ENCODE measurements at regions of chr1 and their contacts with region 1.

Region 1: GRCh38 chr1:101238681-101239094 is 1.9 kb downstream of the S1PR1 start:
- DNase-seq: peak; percentile 93
- ATAC-seq: peak; percentile 72

Region 2: DNA sequence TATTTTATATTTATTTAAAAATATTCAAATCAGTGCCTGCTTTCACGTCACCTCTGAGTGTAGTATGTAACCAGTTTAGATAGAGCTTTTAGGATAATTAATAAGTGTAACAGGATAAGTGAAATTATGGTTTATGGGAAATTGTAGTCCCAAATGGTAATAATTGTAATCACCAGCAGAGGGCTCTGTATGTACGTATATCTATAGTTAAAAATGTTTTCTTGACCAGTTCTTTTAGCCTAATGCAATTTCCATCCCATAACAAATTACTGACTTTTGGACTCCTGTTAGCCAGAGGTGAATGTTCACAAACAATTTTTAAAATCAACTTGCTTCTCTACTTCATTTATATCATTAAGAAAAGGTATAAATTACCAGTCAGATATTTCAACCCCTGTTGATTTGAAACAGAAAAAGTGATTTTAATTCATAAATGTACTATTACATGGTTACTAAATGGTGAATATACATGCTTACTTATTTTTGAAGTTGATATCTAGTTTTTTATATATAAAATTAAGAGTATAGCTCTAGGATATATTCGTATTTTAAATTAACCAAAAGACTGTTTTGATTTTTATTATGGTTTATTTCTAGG is 317.5 kb before region 1 on chr1:
- intact Hi-C with region 1: loop called (anchors 2 kb)
- DNase-seq: no peak
- ATAC-seq: no peak

Region 3: GRCh38 chr1:101025657-101026504 is 212.8 kb before region 1 on chr1 and contains the start of gene DPH5:
- intact Hi-C with region 1: loop called (anchors 1 kb)
- DNase-seq: peak; percentile 96
- ATAC-seq: peak; percentile 98
- total RNA-seq, gene DPH5: 35.4 TPM

Region 4: GRCh38 chr1:101136739-101137138 is 101.9 kb before region 1 on chr1:
- intact Hi-C with region 1: loop called (anchors 2 kb)
- DNase-seq: no peak
- ATAC-seq: no peak

Region 5: GRCh38 chr1:101161619-101162018 is 77.1 kb before region 1 on chr1:
- intact Hi-C with region 1: loop called (anchors 5 kb)
- DNase-seq: no peak
- ATAC-seq: no peak

Region 6: GRCh38 chr1:101181930-101182329 is 56.8 kb before region 1 on chr1:
- intact Hi-C with region 1: loop called (anchors 2 kb)
- DNase-seq: no peak
- ATAC-seq: peak; percentile 52

Region 7: GRCh38 chr1:101288491-101288944 is 49.8 kb after region 1 on chr1:
- intact Hi-C with region 1: loop called (anchors 2 kb)
- DNase-seq: no peak
- ATAC-seq: peak; percentile 88